Right ventricle myocardium inferior (tissue), 1 donor: ENCODE measurements at regions of chr11 and their contacts with region 1.

Region 1: DNA sequence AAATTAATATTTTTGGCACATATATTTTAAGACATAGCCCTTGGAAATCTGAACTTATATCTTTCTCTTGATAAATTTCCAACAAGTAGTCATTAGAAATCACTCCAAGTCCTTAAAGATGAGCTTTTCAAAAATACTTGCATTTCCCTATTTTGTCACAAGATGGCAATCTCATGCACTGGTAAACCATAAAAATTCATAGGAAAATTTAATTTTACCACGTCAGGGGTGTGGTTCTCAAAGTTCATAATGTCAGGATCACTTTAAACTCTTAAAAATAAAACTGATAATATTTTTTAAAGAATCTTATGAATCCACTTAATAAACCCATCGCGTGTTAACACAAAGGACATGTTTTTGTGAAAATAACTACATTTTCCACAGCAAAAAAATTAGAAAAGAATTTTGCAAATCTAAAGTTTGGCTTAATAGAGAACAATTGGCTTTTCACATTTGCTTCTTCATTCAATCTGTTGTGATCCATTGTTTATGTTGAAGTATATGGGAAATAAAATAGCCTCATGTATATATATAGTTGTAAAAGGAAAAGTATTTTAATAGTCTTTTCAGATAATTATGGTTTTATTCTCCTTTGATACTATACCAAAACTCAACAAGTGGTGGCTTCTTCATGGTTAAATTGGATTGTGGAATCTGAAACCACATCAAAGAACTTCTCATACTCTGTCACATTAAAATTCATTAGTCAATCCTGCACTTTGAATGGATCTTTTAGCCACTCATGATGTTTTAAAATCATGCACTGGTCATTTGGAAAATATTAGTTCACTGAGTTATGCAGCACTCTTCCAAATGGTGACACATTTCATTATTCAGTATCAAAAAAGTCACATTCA is 169.1 kb downstream of the CADM1 start:
- DNase-seq: no peak
- ATAC-seq: no peak

Region 2: GRCh38 chr11:115678942-115679341 is 343.8 kb after region 1 on chr11:
- intact Hi-C with region 1: loop called (anchors 5 kb)
- DNase-seq: no peak
- ATAC-seq: peak; percentile 69

Region 3: DNA sequence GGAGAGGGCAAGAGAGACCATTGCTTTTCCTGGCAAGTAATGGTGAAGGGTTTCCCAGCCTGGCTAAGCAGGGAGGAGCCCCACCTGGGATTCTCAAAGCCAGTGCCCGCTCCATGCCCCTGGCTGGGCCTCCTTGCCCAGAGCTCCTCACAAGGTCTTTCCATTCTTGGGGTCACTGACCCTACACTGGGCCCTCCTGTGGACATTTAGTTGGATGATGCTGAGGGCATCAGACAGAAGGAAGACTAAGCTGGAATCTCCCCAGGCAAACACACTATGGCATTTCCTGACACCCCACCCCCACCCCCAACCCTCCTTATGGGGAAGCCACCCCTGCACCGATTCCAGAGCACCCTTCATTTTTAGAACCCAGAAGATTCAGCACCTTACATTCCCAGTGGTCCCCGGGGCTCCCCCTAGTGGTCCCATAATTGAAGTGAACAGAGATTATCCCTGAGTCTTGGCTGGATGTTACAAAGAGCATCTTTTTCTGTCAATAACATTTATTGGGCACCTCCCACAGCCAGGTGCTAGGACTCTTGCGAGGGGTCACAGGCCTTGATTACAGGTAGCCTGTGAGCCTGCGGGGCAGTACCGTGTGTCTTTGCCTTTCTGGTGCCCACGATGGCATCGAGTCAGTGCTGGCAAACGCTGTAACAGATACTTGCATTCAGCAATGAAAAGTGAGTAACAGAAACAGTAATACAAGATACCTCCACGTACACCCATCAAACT is 889.2 kb after region 1 on chr11:
- intact Hi-C with region 1: loop called (anchors 5 kb)
- DNase-seq: no peak
- ATAC-seq: no peak